ENCODE measurements at regions of chr9 and their contacts with region 1.

Region 1: DNA sequence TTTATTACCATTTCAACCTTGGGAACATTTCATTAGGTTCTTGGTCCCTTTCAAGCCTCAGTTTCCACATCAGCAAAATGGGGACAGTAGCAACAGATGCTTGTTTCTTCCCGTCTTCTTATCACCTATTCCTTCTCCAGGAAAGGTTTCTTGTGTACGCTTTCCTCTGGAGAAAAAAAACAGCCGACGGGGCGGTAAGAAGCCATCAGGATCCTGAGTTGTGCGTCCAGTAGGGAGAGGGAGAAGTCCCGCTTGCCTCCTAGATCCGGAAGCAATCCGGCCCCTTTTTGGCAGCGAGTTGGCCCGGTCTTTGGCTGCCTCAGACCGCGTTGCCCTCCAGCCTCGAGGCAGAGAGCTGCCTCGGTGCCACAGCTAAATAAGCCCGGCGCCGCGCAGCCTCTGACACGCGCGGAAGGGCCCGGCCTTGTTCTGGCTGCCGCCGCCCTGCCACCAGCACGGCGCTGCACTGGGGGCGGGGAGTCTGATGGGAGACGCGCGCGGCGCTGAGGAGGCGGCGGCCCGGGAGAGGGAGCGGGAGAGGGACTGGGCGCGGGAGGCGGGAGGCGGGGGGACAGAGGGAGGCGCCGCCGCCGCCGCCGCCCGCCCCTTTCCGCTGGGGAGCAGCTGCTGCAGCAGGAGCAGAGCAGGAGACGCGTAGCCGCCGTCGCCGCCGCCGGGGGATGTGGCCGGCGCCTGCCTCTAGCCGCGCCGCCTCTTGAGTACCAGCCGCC is at the start of gene SLC44A1:
- DNase-seq: peak; percentile 84 to 99
- H3K4me3 ChIP-seq: peak within 1 kb of the TSS; percentile 97
- H3K27ac ChIP-seq: peak within 1 kb of the TSS; percentile 85
- H3K4me1 ChIP-seq: peaks cover 25% of the 10 kb centered on the region
- H3K27me3 ChIP-seq: no peaks in the 10 kb centered on the region
- CTCF ChIP-seq: no peak
- total RNA-seq, gene SLC44A1: 70.2 and 95.2 TPM in 2 replicates

Region 2: DNA sequence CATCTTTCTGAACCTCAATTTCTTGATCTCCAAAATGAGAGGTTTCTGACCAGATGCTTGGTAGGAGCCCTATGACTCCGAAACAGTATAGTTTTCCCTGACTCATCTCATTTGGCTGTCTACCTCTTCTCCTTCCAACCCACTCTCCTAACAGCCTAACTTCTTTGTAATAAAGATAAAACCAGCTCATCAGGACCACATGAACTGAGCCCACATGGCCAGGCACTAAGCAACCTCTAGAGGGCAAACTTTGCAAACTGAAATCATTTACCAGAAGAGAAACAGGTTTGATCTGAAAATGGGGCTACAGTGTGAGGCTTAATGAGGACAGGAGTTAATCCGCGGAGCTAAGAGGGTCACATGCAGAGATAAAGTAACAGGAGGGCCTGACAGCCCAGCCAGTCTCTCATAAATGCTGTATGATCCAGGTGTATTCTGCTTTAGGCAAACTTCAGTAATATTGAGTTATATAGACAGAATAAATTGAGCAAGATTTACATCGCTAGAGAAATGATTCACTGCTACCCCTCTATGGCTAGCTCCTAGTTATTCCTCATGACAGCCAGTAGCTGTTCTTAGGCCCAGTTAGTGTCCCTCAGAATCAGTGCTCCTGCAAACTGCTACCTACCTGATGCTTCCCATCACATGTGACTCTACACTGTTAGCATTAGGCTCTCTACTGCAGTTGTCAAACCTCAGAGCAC is 380.8 kb before region 1 on chr9:
- CTCF ChIA-PET with region 1: interaction called, 4 read pairs
- POLR2A ChIA-PET with region 1: no interaction called
- intact Hi-C with region 1: loop called (anchors 2 kb)
- DNase-seq: peak; percentile 56
- H3K4me3 ChIP-seq: no peak overlapping the region
- H3K27ac ChIP-seq: peak overlapping the region; percentile 21; the same call in 1 of the 2 replicates
- H3K4me1 ChIP-seq: peaks cover 50% of the 10 kb centered on the region
- H3K27me3 ChIP-seq: no peaks in the 10 kb centered on the region
- CTCF ChIP-seq: peak; percentile 84

Region 3: DNA sequence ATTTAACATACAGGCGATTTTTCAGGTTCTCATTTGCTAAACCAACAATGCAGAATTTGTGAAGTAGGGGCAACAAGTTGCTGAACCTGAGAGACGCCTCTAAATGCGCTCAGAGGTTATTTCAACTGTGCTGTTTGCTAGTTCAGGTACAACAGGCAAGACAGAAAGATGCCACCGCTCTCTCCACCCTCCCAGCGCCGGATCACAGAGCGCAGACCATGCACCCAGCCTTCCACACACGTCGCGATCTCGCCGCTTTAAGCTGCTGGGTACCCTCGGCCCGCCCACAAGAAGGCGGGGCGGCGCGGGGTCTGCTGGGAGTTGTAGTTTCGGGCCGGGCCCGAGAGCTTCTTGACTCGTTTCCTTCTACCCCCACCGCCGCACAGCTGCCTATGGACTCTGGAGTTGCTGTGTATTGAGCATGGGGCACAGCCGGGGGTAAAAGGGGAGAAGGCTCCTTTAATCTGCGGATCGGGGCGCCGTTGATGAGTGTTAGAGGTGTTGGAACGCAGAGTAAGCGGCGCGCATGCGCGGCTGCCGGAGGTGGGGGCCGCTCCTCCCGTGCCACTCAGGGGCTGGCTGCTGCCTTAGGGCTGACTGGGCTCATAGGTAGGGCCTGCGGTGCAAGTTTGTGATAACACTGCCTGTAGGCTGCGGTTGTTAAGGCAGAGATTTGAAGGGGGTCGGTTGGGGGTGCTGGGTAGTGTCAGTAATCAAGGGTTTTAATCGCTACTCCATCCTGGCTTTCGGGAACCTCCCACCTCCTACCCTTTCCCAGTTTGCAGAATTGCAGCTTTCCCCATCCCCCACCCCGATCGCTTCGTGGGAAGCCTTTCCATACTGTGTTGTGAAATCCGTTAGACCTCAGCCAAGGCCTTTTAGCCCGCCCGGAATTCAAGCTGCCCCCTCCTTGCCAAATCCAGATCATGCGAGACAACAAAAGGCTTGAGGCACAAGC is 275.9 kb before region 1 on chr9:
- CTCF ChIA-PET with region 1: no interaction called
- POLR2A ChIA-PET with region 1: no interaction called
- intact Hi-C with region 1: loop called (anchors 10 kb)
- DNase-seq: peak; percentile 74 to 91
- H3K4me3 ChIP-seq: peak overlapping the region; percentile 99
- H3K27ac ChIP-seq: peak overlapping the region; percentile 85
- H3K4me1 ChIP-seq: peaks cover 26% of the 10 kb centered on the region
- H3K27me3 ChIP-seq: no peaks in the 10 kb centered on the region
- CTCF ChIP-seq: no peak

Region 4: GRCh38 chr9:105157130-105157583 is 87.0 kb before region 1 on chr9:
- CTCF ChIA-PET with region 1: no interaction called
- POLR2A ChIA-PET with region 1: no interaction called
- intact Hi-C with region 1: loop called (anchors 1 kb)
- DNase-seq: peak; percentile 52 to 71
- H3K4me3 ChIP-seq: no peak overlapping the region
- H3K27ac ChIP-seq: no peak overlapping the region
- H3K4me1 ChIP-seq: peaks cover 24% of the 10 kb centered on the region
- H3K27me3 ChIP-seq: no peaks in the 10 kb centered on the region
- CTCF ChIP-seq: peak; percentile 71

Region 5: DNA sequence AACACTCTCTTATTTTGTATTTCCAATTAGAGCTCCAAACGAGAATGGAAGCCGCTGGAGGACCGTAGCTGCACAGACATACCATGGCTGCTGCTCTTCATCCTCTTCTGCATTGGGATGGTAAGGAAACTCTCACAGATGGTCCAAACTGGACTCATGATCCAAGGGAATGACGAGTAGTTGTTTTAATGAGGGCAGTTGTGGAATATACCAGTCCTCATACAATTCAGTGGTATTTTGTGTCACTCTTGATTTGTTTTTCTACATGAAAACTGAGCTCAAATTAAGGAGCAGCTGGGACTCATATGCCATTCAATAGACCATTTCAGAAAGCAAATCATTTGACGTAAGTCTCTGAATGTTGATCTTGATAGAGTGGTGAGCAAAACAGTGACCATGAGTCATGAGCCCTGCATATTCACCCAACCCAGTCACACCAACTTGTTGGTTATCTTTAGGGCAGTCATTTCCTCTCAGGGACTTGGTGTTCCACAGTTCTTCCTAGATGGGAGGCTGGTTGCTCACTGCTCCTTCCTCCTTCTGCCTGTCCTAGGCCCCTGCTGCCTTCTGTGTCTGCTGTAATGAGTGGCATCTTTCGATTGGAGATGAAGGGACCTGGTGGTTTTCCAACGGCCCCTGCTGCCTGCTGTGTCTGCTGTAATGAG is 55.2 kb after region 1 on chr9:
- CTCF ChIA-PET with region 1: no interaction called
- POLR2A ChIA-PET with region 1: interaction called, 6 read pairs
- intact Hi-C with region 1: loop called (anchors 1 kb)
- DNase-seq: peak; percentile 56 to 70
- H3K4me3 ChIP-seq: no peak overlapping the region
- H3K27ac ChIP-seq: peak overlapping the region; percentile 56
- H3K4me1 ChIP-seq: peaks cover 50% of the 10 kb centered on the region
- H3K27me3 ChIP-seq: no peaks in the 10 kb centered on the region
- CTCF ChIP-seq: no peak

Region 6: GRCh38 chr9:105672711-105673234 is 428.6 kb after region 1 on chr9:
- CTCF ChIA-PET with region 1: no interaction called
- POLR2A ChIA-PET with region 1: no interaction called
- intact Hi-C with region 1: no loop called
- DNase-seq: no peak
- H3K4me3 ChIP-seq: no peak overlapping the region
- H3K27ac ChIP-seq: no peak overlapping the region
- H3K4me1 ChIP-seq: no peaks in the 10 kb centered on the region
- H3K27me3 ChIP-seq: no peaks in the 10 kb centered on the region
- CTCF ChIP-seq: no peak

Region 7: GRCh38 chr9:105694190-105694847 is 450.2 kb after region 1 on chr9 and contains the start of gene TMEM38B:
- CTCF ChIA-PET with region 1: no interaction called
- POLR2A ChIA-PET with region 1: interaction called, 3 read pairs
- intact Hi-C with region 1: loop called (anchors 10 kb)
- DNase-seq: peak; percentile 53 to 86
- H3K4me3 ChIP-seq: peak within 1 kb of the TSS; percentile 87
- H3K27ac ChIP-seq: no peak within 1 kb of the TSS
- H3K4me1 ChIP-seq: peaks cover 15% of the 10 kb centered on the region
- H3K27me3 ChIP-seq: no peaks in the 10 kb centered on the region
- CTCF ChIP-seq: no peak
- total RNA-seq, gene TMEM38B: 19.0 and 19.5 TPM in 2 replicates

Measured in PC-9 (cell line).